A549 (cell line): ENCODE measurements at regions of chr9 and their contacts with region 1.

Region 1: DNA sequence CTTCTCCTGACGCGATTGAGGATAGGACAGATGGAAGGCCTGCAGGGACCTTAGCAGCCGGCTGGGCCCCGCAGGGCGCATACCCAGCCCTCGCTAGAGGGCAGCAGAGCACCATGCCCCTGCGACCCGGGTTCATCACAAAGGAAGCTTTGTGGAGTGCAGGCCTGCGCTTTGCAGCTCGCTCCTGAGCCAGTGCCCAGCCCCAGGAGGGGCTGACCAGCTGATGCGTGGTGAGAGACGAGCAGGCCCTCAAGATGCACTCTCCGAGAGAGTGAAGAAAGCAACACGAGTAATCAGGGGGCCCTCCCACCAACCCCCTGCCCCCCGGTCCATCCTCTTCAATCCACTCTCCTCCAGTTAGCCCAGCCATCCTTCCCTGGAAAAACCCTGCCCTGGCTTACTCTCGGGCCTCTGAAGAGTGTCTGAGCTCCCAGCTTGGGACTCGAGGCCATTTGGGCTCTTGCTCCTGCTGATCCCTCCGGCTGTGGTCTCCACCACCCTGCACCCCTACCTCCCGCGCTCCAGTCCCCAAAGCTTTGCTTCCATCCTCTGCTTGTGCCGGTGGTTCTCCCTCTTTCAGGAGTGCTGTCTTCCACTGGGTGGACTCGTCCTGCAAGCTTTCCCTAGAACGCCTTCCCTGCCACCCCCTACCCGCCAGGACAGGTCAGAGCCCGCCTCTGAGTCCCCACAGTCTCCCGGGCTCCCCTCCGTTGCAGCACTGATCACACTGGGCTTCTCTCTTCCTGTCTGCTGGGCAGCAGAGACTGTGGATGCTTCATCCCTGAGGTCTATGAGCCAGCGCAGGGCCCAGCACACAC is 9.1 kb upstream of the KIF12 start:
- DNase-seq: peak; percentile 83 to 91
- ATAC-seq: peak; percentile 97 to 99
- H3K4me3 ChIP-seq: no peak overlapping the region
- H3K27ac ChIP-seq: peak overlapping the region; percentile 39 to 73; a peak in 5 of 6 replicates
- H3K4me1 ChIP-seq: peaks cover 38% of the 10 kb centered on the region
- CTCF ChIP-seq: peak; percentile 92
- EP300 ChIP-seq: no peak
- POLR2A ChIP-seq: no peak
- RAD21 ChIP-seq: peak; percentile 97

Region 2: GRCh38 chr9:114092336-114092735 is 15.9 kb before region 1 on chr9:
- CTCF ChIA-PET with region 1: interaction called, 59 read pairs
- POLR2A ChIA-PET with region 1: no interaction called
- DNase-seq: no peak
- ATAC-seq: no peak
- H3K4me3 ChIP-seq: no peak overlapping the region
- H3K27ac ChIP-seq: no peak overlapping the region
- H3K4me1 ChIP-seq: peaks cover 3% of the 10 kb centered on the region; the same call in 1 of the 3 replicates
- CTCF ChIP-seq: no peak
- EP300 ChIP-seq: no peak
- POLR2A ChIP-seq: no peak
- RAD21 ChIP-seq: no peak

Region 3: GRCh38 chr9:114155263-114155972 is 47.2 kb after region 1 on chr9 and contains the start of gene COL27A1:
- CTCF ChIA-PET with region 1: interaction called, 157 read pairs
- POLR2A ChIA-PET with region 1: interaction called, 3 read pairs
- DNase-seq: peak; percentile 76 to 82
- ATAC-seq: peak; percentile 80 to 90
- H3K4me3 ChIP-seq: peak within 1 kb of the TSS; percentile 92
- H3K27ac ChIP-seq: peak within 1 kb of the TSS; percentile 69 to 96
- H3K4me1 ChIP-seq: peaks cover 23% of the 10 kb centered on the region
- CTCF ChIP-seq: peak; percentile 81
- EP300 ChIP-seq: no peak
- POLR2A ChIP-seq: peak; percentile 39; the same call in 1 of the 2 replicates
- RAD21 ChIP-seq: peak; percentile 76 to 84
- polyA plus RNA-seq, gene COL27A1: 6.9 and 8.5 TPM in 2 replicates

Region 4: GRCh38 chr9:114224247-114224610 is 116.0 kb after region 1 on chr9:
- CTCF ChIA-PET with region 1: interaction called, 34 read pairs
- POLR2A ChIA-PET with region 1: no interaction called
- DNase-seq: peak; percentile 58 to 64
- ATAC-seq: peak; percentile 80 to 82
- H3K4me3 ChIP-seq: no peak overlapping the region
- H3K27ac ChIP-seq: peak overlapping the region; percentile 30 to 64; a peak in 5 of 6 replicates
- H3K4me1 ChIP-seq: peaks cover 22% of the 10 kb centered on the region
- CTCF ChIP-seq: no peak
- EP300 ChIP-seq: no peak
- POLR2A ChIP-seq: no peak
- RAD21 ChIP-seq: no peak

Region 5: GRCh38 chr9:114259798-114260523 is 151.7 kb after region 1 on chr9:
- CTCF ChIA-PET with region 1: interaction called, 33 read pairs
- POLR2A ChIA-PET with region 1: no interaction called
- DNase-seq: no peak
- ATAC-seq: no peak
- H3K4me3 ChIP-seq: no peak overlapping the region
- H3K27ac ChIP-seq: no peak overlapping the region
- H3K4me1 ChIP-seq: no peaks in the 10 kb centered on the region
- CTCF ChIP-seq: no peak
- EP300 ChIP-seq: no peak
- POLR2A ChIP-seq: no peak
- RAD21 ChIP-seq: no peak

Region 6: DNA sequence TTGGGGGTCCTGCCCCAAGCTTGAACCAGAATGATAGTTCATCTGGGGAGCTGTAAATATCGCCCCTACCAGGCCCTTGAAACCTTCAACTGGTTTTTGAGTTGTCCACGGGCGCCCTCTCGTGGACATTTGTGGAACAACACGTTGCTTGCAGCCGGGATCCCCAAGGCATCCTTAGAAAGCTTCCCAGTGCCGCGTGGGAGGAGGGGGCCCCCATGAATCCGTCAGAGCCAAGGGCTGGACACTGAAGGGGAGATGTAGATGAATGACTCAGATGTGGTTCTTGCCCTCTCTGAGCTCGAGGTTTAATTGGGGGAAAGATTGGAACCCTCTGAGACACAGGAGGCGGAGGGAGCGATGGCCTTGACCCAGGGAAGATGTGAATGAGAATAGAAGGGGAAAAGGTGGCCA is 182.8 kb after region 1 on chr9:
- CTCF ChIA-PET with region 1: interaction called, 216 read pairs
- POLR2A ChIA-PET with region 1: no interaction called
- DNase-seq: peak; percentile 57 to 64
- ATAC-seq: peak; percentile 32 to 69; a peak in 4 of 6 replicates
- H3K4me3 ChIP-seq: no peak overlapping the region
- H3K27ac ChIP-seq: peak overlapping the region; percentile 63 to 88
- H3K4me1 ChIP-seq: peaks cover 39% of the 10 kb centered on the region
- CTCF ChIP-seq: peak; percentile 91
- EP300 ChIP-seq: no peak
- POLR2A ChIP-seq: no peak
- RAD21 ChIP-seq: peak; percentile 94 to 96

Region 7: DNA sequence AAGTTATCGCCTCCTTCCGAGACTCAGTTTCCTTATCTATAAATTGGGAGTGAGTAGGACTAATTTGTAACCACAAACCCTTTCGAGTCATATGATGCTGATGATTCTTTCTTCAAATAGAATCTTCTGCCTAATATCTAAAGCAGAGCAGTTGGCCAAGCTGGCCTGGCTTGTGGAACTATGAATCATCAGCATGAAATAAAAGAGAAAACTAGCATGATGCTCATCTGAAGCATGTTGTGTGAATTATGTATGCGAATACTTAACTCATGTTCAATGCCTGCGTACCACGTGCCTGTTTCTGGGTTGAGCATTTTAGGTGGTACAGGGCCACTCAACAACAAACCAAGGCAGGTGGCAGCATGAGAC is 199.7 kb after region 1 on chr9:
- CTCF ChIA-PET with region 1: no interaction called
- POLR2A ChIA-PET with region 1: no interaction called
- DNase-seq: no peak
- ATAC-seq: no peak
- H3K4me3 ChIP-seq: no peak overlapping the region
- H3K27ac ChIP-seq: no peak overlapping the region
- H3K4me1 ChIP-seq: no peaks in the 10 kb centered on the region
- CTCF ChIP-seq: no peak
- EP300 ChIP-seq: no peak
- POLR2A ChIP-seq: no peak
- RAD21 ChIP-seq: no peak